CD8-positive, alpha-beta T cell (primary cell): ENCODE measurements at regions of chr6 and their contacts with region 1.

Region 1: GRCh38 chr6:149934249-149935156 is 7.3 kb upstream of the ULBP2 start:
- DNase-seq: peak; percentile 47 to 86 (median 74)
- ATAC-seq: peak; percentile 58
- H3K4me3 ChIP-seq: no peak overlapping the region
- H3K4me3 Mint-ChIP-seq: no peak overlapping the region
- H3K27ac ChIP-seq: no peak overlapping the region
- H3K27ac Mint-ChIP-seq: no peak overlapping the region
- H3K4me1 ChIP-seq: peaks cover 13% of the 10 kb centered on the region
- H3K4me1 Mint-ChIP-seq: peaks cover 16% of the 10 kb centered on the region
- H3K27me3 ChIP-seq: peaks cover 43 to 60% of the 10 kb centered on the region in 2 experiments
- H3K27me3 Mint-ChIP-seq: peaks cover 80% of the 10 kb centered on the region
- CTCF ChIP-seq: peak; percentile 88

Region 2: GRCh38 chr6:149922642-149923326 is 11.7 kb before region 1 on chr6 and contains the start of gene RAET1G:
- CTCF ChIA-PET with region 1: no interaction called
- POLR2A ChIA-PET with region 1: no interaction called
- intact Hi-C with region 1: no loop called
- DNase-seq: peak; percentile 66 to 90 (median 81)
- ATAC-seq: peak; percentile 95
- H3K4me3 ChIP-seq: peak within 1 kb of the TSS; percentile 36 to 53
- H3K4me3 Mint-ChIP-seq: peak within 1 kb of the TSS; percentile 84
- H3K27ac ChIP-seq: no peak within 1 kb of the TSS
- H3K27ac Mint-ChIP-seq: no peak within 1 kb of the TSS
- H3K4me1 ChIP-seq: peaks cover 17% of the 10 kb centered on the region
- H3K4me1 Mint-ChIP-seq: peaks cover 34% of the 10 kb centered on the region
- H3K27me3 ChIP-seq: peaks cover 26 to 30% of the 10 kb centered on the region in 2 experiments
- H3K27me3 Mint-ChIP-seq: peaks cover 76% of the 10 kb centered on the region
- CTCF ChIP-seq: no peak
- total RNA-seq, gene RAET1G: not detected

Region 3: GRCh38 chr6:149963462-149964307 is 29.2 kb after region 1 on chr6 and contains the start of gene ULBP1:
- CTCF ChIA-PET with region 1: interaction called, 6 read pairs
- POLR2A ChIA-PET with region 1: no interaction called
- intact Hi-C with region 1: loop called (anchors 1 to 2 kb)
- DNase-seq: peak; percentile 37 to 85 (median 72)
- ATAC-seq: peak; percentile 75
- H3K4me3 ChIP-seq: peak within 1 kb of the TSS; percentile 63 to 74
- H3K4me3 Mint-ChIP-seq: peak within 1 kb of the TSS; percentile 92
- H3K27ac ChIP-seq: no peak within 1 kb of the TSS
- H3K27ac Mint-ChIP-seq: peak within 1 kb of the TSS; percentile 46
- H3K4me1 ChIP-seq: peaks cover 25% of the 10 kb centered on the region
- H3K4me1 Mint-ChIP-seq: peaks cover 25% of the 10 kb centered on the region
- H3K27me3 ChIP-seq: peaks cover 31 to 44% of the 10 kb centered on the region in 2 experiments
- H3K27me3 Mint-ChIP-seq: peaks cover 84% of the 10 kb centered on the region
- CTCF ChIP-seq: no peak
- total RNA-seq, gene ULBP1: 0.28 to 0.41 TPM

Region 4: GRCh38 chr6:150016324-150017185 is 82.1 kb after region 1 on chr6:
- CTCF ChIA-PET with region 1: interaction called, 42 read pairs
- POLR2A ChIA-PET with region 1: interaction called, 4 read pairs
- intact Hi-C with region 1: loop called (anchors 1 kb)
- DNase-seq: peak; percentile 18 to 83 (median 55)
- ATAC-seq: peak; percentile 88
- H3K4me3 ChIP-seq: no peak overlapping the region
- H3K4me3 Mint-ChIP-seq: no peak overlapping the region
- H3K27ac ChIP-seq: no peak overlapping the region
- H3K27ac Mint-ChIP-seq: no peak overlapping the region
- H3K4me1 ChIP-seq: peaks cover 5% of the 10 kb centered on the region
- H3K4me1 Mint-ChIP-seq: peaks cover 9% of the 10 kb centered on the region
- H3K27me3 ChIP-seq: peaks cover 13 to 28% of the 10 kb centered on the region in 2 experiments
- H3K27me3 Mint-ChIP-seq: peaks cover 64% of the 10 kb centered on the region
- CTCF ChIP-seq: peak; percentile 70

Region 5: GRCh38 chr6:150068720-150069648 is 134.5 kb after region 1 on chr6 and contains the start of gene ULBP3:
- CTCF ChIA-PET with region 1: no interaction called
- POLR2A ChIA-PET with region 1: no interaction called
- intact Hi-C with region 1: loop called in 1 of 2 experiments (anchors 5 kb)
- DNase-seq: peak; percentile 26 to 82 (median 62)
- ATAC-seq: peak; percentile 78
- H3K4me3 ChIP-seq: peak within 1 kb of the TSS; percentile 83 to 85
- H3K4me3 Mint-ChIP-seq: peak within 1 kb of the TSS; percentile 83
- H3K27ac ChIP-seq: no peak within 1 kb of the TSS
- H3K27ac Mint-ChIP-seq: no peak within 1 kb of the TSS
- H3K4me1 ChIP-seq: peaks cover 6% of the 10 kb centered on the region
- H3K4me1 Mint-ChIP-seq: peaks cover 14% of the 10 kb centered on the region
- H3K27me3 ChIP-seq: peaks cover 0 to 3% of the 10 kb centered on the region in 2 experiments
- H3K27me3 Mint-ChIP-seq: peaks cover 7% of the 10 kb centered on the region
- CTCF ChIP-seq: no peak
- total RNA-seq, gene ULBP3: 1.5 to 1.8 TPM

Region 6: DNA sequence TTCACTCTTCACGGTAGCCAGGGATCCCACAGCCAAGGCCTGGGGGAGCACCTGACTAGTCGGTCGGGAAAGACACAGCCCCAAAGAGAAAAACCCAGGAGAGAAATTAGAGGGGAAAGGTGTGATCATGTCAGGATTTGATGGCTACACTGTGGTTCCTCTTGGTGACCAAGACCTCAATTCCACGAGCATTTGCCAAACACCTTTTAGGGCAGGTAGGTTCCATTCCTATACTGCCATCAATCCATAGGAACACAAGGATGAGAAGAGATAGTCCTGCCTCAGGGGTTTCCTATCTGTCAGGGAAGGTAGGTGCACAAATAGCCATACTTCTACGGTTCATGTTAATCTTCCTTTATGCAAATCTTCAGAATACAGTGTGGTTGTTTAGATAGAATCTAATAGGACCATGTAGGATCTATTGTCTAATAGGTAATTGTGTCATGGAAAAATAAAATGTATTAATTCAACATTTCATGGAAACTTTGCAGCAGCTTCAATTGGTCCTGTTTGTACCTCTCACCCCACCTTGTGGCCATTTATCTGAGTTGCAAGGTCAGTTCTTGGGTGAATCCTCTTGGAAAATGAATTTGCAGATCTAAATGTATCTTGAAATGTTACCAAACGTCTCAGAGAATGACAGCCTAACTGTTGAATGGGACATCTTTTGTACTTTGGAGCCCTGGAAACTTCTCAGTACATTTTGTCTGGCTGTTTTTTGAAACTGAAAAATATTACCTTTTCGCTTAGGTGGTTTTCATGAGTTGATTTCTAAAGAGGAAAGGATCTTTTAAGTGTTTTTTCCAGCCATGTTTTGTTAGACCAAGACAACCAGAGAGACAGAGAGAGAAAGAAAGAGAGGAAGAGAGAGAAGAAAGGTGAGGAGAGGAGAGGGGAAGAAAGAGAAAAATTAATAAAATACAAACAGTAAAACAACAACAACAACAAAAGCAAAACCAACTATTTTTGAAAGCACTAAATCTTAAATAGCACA is 400.6 kb after region 1 on chr6:
- CTCF ChIA-PET with region 1: no interaction called
- POLR2A ChIA-PET with region 1: no interaction called
- intact Hi-C with region 1: loop called in 1 of 2 experiments (anchors 10 kb)
- DNase-seq: peak in 3 of 9 experiments; percentile 30 to 69 (median 62)
- ATAC-seq: no peak
- H3K4me3 ChIP-seq: no peak overlapping the region
- H3K4me3 Mint-ChIP-seq: no peak overlapping the region
- H3K27ac ChIP-seq: no peak overlapping the region
- H3K27ac Mint-ChIP-seq: no peak overlapping the region
- H3K4me1 ChIP-seq: no peaks in the 10 kb centered on the region
- H3K4me1 Mint-ChIP-seq: no peaks in the 10 kb centered on the region
- H3K27me3 ChIP-seq: no peaks in the 10 kb centered on the region
- H3K27me3 Mint-ChIP-seq: peaks cover 6% of the 10 kb centered on the region
- CTCF ChIP-seq: peak; percentile 59

Region 7: DNA sequence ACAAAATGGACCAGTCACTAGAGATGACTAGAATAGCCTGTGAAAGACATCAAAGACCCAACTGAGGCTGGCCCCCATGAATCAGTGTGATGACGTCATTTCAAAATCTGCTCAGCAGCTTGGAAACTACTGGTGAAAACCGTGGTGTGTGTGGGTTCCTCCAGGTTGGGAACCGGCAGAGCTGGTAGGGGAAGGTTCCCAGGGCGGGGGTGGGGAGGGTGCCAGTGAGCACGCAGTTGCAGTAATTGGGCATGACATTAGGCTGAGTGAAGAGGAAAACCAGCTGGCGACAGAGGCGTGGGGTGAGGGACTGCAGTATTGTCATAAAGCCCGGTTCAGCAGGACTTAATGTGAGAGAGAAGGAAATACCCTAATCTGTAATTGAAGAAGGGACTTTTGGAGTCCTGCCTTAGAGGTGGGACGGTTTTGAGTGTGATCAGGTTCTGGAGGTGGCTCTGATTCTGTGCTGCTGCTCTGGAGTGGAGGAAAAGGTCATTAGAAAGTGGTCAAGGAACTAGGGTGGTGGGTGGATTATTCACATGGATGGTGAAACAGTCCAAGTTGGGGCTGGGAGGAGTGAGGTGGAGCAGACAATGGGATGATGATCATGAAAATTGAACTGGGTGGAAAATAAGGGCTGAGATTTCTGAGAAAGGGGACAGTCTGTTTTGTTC is 879.0 kb after region 1 on chr6:
- CTCF ChIA-PET with region 1: no interaction called
- POLR2A ChIA-PET with region 1: no interaction called
- intact Hi-C with region 1: loop called (anchors 5 to 10 kb)
- DNase-seq: peak in 4 of 9 experiments; percentile 8 to 64 (median 38)
- ATAC-seq: peak; percentile 46
- H3K4me3 ChIP-seq: no peak overlapping the region
- H3K4me3 Mint-ChIP-seq: no peak overlapping the region
- H3K27ac ChIP-seq: peak overlapping the region in 1 of 2 experiments; percentile 19
- H3K27ac Mint-ChIP-seq: no peak overlapping the region
- H3K4me1 ChIP-seq: no peaks in the 10 kb centered on the region
- H3K4me1 Mint-ChIP-seq: peaks cover 4% of the 10 kb centered on the region
- H3K27me3 ChIP-seq: no peaks in the 10 kb centered on the region
- H3K27me3 Mint-ChIP-seq: peaks cover 7% of the 10 kb centered on the region
- CTCF ChIP-seq: no peak